Left lung (tissue), 14 donors: ENCODE measurements at regions of chr13 and their contacts with region 1.

Region 1: DNA sequence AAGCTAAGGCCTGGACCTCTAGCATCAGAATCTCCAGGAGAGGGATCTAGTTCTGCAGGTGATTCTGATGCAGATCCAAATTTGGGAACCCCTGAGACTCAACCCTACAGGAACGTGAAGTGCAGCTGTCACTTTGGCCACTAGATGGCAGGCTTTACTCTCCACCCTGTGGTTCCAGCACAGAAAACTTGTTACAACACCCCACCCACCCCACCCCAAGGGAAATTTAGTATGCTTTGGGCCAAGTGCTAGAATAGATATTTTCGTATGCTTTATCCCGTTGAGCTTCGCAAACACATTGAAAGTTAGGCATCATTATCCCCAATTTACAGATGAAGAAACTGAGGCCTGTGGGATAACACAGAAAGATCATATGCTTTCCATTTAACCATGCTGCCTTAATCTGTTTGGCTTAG is 232.0 kb downstream of the B3GLCT start:
- DNase-seq: peak in 1 of 4 donors; percentile 38
- ATAC-seq: peak; percentile 79
- H3K4me3 ChIP-seq: no peak overlapping the region
- H3K27ac ChIP-seq: no peak overlapping the region
- H3K4me1 ChIP-seq: no peaks in the 10 kb centered on the region
- H3K27me3 ChIP-seq: peaks cover 0 to 4% of the 10 kb centered on the region in 2 donors
- CTCF ChIP-seq: peak; percentile 77 to 91

Region 2: DNA sequence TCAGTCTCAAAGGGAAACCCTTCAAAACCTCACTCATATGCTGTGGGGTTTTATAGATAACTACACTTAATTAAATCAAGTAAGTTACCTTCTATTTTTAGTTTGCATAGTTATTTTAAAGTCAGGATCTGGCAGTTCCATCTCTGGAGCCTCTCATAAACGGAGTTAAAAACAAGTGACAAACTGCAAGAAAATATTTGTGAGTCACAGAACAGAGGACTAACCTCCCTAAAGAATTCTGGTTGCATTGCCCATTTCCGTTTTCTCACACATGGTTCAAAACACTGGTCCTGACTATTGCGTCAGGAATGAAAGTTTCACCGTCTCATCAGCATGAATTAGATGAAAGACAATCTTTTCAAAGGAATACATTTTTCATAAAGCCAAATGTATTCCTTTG is 318.2 kb after region 1 on chr13:
- intact Hi-C with region 1: loop called in 1 of 2 experiments (anchors 5 kb)
- DNase-seq: no peak
- ATAC-seq: no peak
- H3K4me3 ChIP-seq: no peak overlapping the region
- H3K27ac ChIP-seq: no peak overlapping the region
- H3K4me1 ChIP-seq: no peaks in the 10 kb centered on the region
- H3K27me3 ChIP-seq: peaks cover 0 to 15% of the 10 kb centered on the region in 2 donors
- CTCF ChIP-seq: no peak